ENCODE measurements at regions of chr7 and their contacts with region 1.

Region 1: DNA sequence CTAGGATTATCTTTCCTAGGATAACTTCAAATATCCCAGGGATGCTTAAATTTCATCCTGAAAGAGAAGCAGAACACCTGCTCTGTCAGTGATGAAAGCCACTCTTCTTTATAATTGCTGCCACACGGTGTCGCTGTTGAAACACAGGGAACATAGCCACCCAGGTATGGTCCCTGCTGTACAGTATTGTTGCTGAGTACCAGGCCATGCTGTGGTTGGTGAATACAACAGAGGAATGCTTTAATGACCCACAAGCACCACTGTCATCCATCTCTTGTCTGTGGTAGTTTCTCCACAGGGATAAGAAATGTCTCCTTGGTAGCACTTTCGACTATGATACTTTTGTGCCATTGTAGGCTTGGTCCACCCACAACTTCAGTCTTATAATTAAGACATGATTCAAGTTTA is 70.6 kb upstream of the STARD3NL start:
- DNase-seq: peak; percentile 67
- H3K4me3 ChIP-seq: no peak overlapping the region
- H3K27ac ChIP-seq: no peak overlapping the region
- H3K4me1 ChIP-seq: no peaks in the 10 kb centered on the region
- H3K27me3 ChIP-seq: no peaks in the 10 kb centered on the region
- CTCF ChIP-seq: peak; percentile 33 to 70 (median 53)
- EP300 ChIP-seq: no peak
- POLR2A ChIP-seq: no peak

Region 2: DNA sequence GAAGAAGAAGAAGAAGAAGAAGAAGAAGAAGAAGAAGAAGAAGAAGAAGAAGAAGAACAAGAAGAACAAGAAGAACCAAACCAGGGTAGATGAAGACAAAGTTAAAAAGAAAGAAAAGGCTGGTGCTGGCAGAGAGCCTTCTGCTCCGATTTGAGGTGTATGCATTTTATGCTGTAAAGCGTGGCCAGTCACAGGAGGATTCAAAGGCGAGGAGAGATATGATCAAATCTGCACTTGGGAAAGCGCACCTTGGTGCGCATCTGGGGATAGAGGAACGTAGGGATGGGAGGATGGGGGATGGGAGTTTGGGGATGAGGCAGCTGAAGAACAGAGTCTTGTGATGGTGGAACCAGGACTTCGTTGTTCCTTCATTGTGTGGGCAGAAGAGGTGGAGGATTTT is 259.2 kb before region 1 on chr7 and contains the start of gene NME8:
- intact Hi-C with region 1: no loop called
- DNase-seq: no peak
- H3K4me3 ChIP-seq: no peak within 1 kb of the TSS
- H3K27ac ChIP-seq: no peak within 1 kb of the TSS
- H3K4me1 ChIP-seq: no peaks in the 10 kb centered on the region
- H3K27me3 ChIP-seq: no peaks in the 10 kb centered on the region
- CTCF ChIP-seq: no peak
- EP300 ChIP-seq: no peak
- POLR2A ChIP-seq: no peak
- total RNA-seq, gene NME8: 0.36 TPM in 1 of 4 donors, not detected in the others

Region 3: GRCh38 chr7:37901236-37901827 is 206.2 kb before region 1 on chr7:
- intact Hi-C with region 1: loop called (anchors 5 kb)
- DNase-seq: no peak
- H3K4me3 ChIP-seq: no peak overlapping the region
- H3K27ac ChIP-seq: peak overlapping the region in 1 of 4 donors; percentile 13
- H3K4me1 ChIP-seq: peaks cover 0 to 22% (median 18%) of the 10 kb centered on the region in 4 donors
- H3K27me3 ChIP-seq: no peaks in the 10 kb centered on the region
- CTCF ChIP-seq: peak in 2 of 4 experiments; percentile 34 to 46
- EP300 ChIP-seq: no peak
- POLR2A ChIP-seq: no peak

Region 4: DNA sequence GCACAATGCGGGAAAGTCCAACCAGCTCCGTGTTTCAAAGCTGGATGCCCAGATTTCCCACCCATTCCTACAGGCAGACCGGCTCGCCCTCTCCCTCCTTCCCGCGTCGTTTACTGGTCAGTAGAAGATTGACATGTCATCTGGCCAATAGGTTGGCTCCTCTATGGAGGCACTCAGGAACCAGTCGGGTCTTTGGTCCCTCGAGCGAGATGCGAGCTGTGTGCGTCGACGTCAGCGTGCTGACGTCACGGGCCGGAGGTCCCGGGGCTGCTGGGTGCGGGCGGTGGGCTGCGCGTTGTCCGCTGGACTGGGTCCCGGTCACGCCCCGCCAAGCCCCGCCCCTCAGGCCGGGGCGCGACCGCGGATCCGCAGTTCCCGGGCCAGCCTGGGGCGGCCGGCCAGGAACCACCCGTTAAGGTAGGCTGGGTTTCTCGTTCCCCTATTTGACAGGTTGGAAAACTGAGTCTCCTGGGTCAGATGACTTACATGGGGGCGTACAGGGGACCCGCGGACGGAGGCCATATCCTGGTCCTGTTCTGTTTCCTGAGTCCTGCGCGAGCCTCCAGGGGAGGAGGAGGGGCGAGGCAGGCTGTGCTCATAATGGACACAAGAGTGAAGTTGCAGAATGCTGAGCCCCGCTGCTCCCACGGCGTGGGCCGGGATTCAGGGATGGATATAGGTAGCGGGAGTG is 70.7 kb after region 1 on chr7 and contains the start of gene STARD3NL:
- intact Hi-C with region 1: loop called (anchors 5 kb)
- DNase-seq: peak; percentile 99
- H3K4me3 ChIP-seq: peak within 1 kb of the TSS; percentile 62 to 85 (median 82)
- H3K27ac ChIP-seq: peak within 1 kb of the TSS; percentile 85 to 95 (median 94)
- H3K4me1 ChIP-seq: peaks cover 0 to 41% (median 25%) of the 10 kb centered on the region in 4 donors
- H3K27me3 ChIP-seq: no peaks in the 10 kb centered on the region
- CTCF ChIP-seq: peak; percentile 18 to 36 (median 20)
- EP300 ChIP-seq: no peak
- POLR2A ChIP-seq: peak in 1 of 2 donors; percentile 36
- total RNA-seq, gene STARD3NL: 28.2 to 67.6 (median 48.5) TPM

Region 5: DNA sequence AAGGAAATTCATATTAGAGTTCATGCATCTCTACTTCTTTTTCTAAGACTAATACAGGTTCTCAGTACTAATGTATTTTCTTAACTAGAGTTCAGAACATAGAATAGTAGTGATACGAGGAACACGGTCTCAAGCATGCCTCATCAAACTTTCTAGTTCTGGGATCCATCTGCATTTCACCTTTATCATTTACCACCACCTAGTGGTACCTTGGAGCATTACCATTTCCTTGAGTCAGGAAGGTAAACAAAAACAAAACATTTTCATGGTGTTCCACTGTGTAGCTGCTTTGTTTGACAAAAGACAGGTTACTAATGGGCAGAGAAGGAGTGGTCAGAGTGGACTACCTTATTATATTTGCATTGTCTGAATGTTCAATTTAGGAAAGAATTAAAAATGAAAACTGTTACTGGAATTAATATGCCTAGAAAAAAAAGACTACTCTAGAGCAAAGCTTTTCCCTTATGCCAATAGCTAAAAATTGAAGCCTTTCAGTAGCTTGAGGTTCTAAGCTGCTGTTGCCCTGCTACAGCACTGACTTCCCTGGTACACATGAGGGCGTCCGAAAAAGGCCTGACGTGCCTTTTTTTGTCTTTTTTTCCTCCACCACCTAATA is 115.1 kb after region 1 on chr7:
- intact Hi-C with region 1: loop called (anchors 1 kb)
- DNase-seq: no peak
- H3K4me3 ChIP-seq: no peak overlapping the region
- H3K27ac ChIP-seq: peak overlapping the region in 2 of 4 donors; percentile 10 to 48
- H3K4me1 ChIP-seq: peaks cover 0 to 14% (median 3%) of the 10 kb centered on the region in 4 donors
- H3K27me3 ChIP-seq: no peaks in the 10 kb centered on the region
- CTCF ChIP-seq: peak; percentile 78 to 88 (median 84)
- EP300 ChIP-seq: no peak
- POLR2A ChIP-seq: no peak

Region 6: DNA sequence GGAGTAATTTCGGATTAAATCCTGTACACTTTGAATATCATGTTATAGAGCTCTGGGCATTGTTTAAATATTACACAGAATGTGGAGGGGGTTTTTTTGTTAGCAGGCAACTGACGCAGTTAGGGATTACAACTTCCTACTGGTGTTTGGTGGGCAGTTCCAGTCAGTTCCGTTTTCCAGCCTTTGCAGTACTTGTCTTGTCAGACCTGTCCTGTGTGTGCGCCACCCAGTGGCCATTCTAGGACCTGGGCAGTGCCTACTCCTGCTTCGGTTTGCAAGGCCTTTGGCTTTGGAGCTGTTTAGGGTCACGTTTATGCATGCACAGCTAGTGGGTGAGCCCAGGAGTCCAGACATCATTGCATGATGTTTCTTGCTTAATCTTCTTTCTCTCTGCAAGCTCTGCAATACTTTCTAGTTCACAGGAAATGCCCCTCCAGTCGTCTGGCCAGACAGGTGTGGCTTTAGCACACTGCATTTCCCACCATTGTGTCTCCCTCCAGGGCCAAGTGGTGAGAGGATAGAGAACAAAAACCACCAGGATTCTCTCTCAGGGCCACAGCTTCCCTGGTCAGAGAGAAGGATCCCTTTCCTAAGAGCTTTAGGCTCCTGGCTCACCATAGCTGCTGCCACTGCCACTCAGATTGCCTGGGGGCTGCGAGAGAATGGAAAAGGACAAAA is 262.5 kb after region 1 on chr7:
- intact Hi-C with region 1: loop called (anchors 5 kb)
- DNase-seq: peak; percentile 89
- H3K4me3 ChIP-seq: peak overlapping the region in 2 of 4 donors; percentile 10 to 22
- H3K27ac ChIP-seq: no peak overlapping the region
- H3K4me1 ChIP-seq: no peaks in the 10 kb centered on the region
- H3K27me3 ChIP-seq: peaks cover 0 to 4% (median 0%) of the 10 kb centered on the region in 3 donors
- CTCF ChIP-seq: peak in 3 of 4 experiments; percentile 39 to 66 (median 58)
- EP300 ChIP-seq: no peak
- POLR2A ChIP-seq: no peak